ENCODE measurements at regions of chr15 and their contacts with region 1.

Region 1: GRCh38 chr15:91515188-91515754 is 338.2 kb upstream of the SLCO3A1 start:
- DNase-seq: no peak
- ATAC-seq: no peak
- H3K4me3 ChIP-seq: no peak overlapping the region
- H3K4me3 Mint-ChIP-seq: no peak overlapping the region
- H3K27ac ChIP-seq: no peak overlapping the region
- H3K27ac Mint-ChIP-seq: no peak overlapping the region
- H3K4me1 ChIP-seq: no peaks in the 10 kb centered on the region
- H3K4me1 Mint-ChIP-seq: peaks cover 0 to 6% of the 10 kb centered on the region in 2 donors
- H3K27me3 ChIP-seq: no peaks in the 10 kb centered on the region
- H3K27me3 Mint-ChIP-seq: peaks cover 16 to 28% of the 10 kb centered on the region in 2 donors
- CTCF ChIP-seq: no peak

Region 2: GRCh38 chr15:91385311-91385710 is 130.0 kb before region 1 on chr15:
- intact Hi-C with region 1: no loop called
- DNase-seq: no peak
- ATAC-seq: no peak
- H3K4me3 ChIP-seq: no peak overlapping the region
- H3K4me3 Mint-ChIP-seq: no peak overlapping the region
- H3K27ac ChIP-seq: no peak overlapping the region
- H3K27ac Mint-ChIP-seq: no peak overlapping the region
- H3K4me1 ChIP-seq: no peaks in the 10 kb centered on the region
- H3K4me1 Mint-ChIP-seq: no peaks in the 10 kb centered on the region
- H3K27me3 ChIP-seq: no peaks in the 10 kb centered on the region
- H3K27me3 Mint-ChIP-seq: peaks cover 38 to 56% of the 10 kb centered on the region in 2 donors
- CTCF ChIP-seq: no peak

Region 3: GRCh38 chr15:91469632-91470567 is 45.4 kb before region 1 on chr15:
- intact Hi-C with region 1: loop called (anchors 5 kb)
- DNase-seq: peak; percentile 24 to 74
- ATAC-seq: peak; percentile 81 to 89 (median 84)
- H3K4me3 ChIP-seq: no peak overlapping the region
- H3K4me3 Mint-ChIP-seq: peak overlapping the region; percentile 45
- H3K27ac ChIP-seq: peak overlapping the region; percentile 63
- H3K27ac Mint-ChIP-seq: peak overlapping the region; percentile 78 to 83
- H3K4me1 ChIP-seq: peaks cover 35% of the 10 kb centered on the region
- H3K4me1 Mint-ChIP-seq: peaks cover 43 to 47% of the 10 kb centered on the region in 2 donors
- H3K27me3 ChIP-seq: no peaks in the 10 kb centered on the region
- H3K27me3 Mint-ChIP-seq: peaks cover 6 to 12% of the 10 kb centered on the region in 2 donors
- CTCF ChIP-seq: no peak

Region 4: GRCh38 chr15:91668370-91668769 is 153.1 kb after region 1 on chr15:
- intact Hi-C with region 1: no loop called
- DNase-seq: no peak
- ATAC-seq: no peak
- H3K4me3 ChIP-seq: no peak overlapping the region
- H3K4me3 Mint-ChIP-seq: no peak overlapping the region
- H3K27ac ChIP-seq: no peak overlapping the region
- H3K27ac Mint-ChIP-seq: no peak overlapping the region
- H3K4me1 ChIP-seq: peaks cover 4% of the 10 kb centered on the region
- H3K4me1 Mint-ChIP-seq: no peaks in the 10 kb centered on the region
- H3K27me3 ChIP-seq: no peaks in the 10 kb centered on the region
- H3K27me3 Mint-ChIP-seq: peaks cover 0 to 16% of the 10 kb centered on the region in 2 donors
- CTCF ChIP-seq: no peak

Region 5: GRCh38 chr15:92638291-92638708 is 1123.0 kb after region 1 on chr15:
- intact Hi-C with region 1: no loop called
- DNase-seq: no peak
- ATAC-seq: no peak
- H3K4me3 ChIP-seq: no peak overlapping the region
- H3K4me3 Mint-ChIP-seq: no peak overlapping the region
- H3K27ac ChIP-seq: no peak overlapping the region
- H3K27ac Mint-ChIP-seq: no peak overlapping the region
- H3K4me1 ChIP-seq: no peaks in the 10 kb centered on the region
- H3K4me1 Mint-ChIP-seq: peaks cover 0 to 5% of the 10 kb centered on the region in 2 donors
- H3K27me3 ChIP-seq: no peaks in the 10 kb centered on the region
- H3K27me3 Mint-ChIP-seq: peaks cover 0 to 24% of the 10 kb centered on the region in 2 donors
- CTCF ChIP-seq: no peak

Measured in natural killer cell (primary cell).